ENCODE measurements at regions of chr16 and their contacts with region 1.

Region 1: DNA sequence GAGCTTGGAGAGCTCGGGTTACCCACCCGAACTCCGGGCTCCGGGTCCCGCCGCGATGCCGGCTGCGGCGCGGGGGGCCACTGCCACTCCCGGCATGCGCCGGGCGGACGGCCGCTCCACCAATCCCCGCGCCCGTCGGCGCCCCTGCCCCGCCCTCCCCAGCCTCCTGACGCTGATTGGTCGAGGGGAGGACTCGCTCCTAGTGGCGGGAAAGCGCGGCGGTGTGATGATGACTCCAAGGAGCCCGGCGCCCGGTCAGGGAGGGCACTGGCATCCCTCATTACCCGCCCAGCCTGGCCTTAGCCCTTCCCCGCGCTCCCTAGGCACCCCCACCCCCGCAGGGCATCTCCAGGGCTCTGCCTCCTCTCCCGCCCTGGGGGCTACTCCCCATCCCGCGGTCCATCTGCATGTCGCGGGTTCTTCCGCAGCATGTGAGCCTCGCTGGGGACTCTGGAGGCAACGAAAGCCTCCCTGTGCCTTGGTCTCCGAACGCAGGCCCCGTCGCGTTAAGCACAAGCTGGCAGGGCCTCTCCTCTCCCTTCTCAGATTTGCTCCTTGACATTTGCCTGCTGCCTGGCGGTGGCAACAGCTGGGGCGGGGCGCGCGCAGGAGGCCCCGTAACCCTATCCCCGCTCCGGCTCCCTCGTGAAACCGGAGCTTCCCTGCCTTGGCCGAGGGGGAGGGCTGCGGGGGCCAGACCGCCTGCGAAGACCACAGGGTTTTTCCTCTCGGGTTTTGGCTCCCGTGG is 1.7 kb downstream of the ATP2A1 start:
- DNase-seq: peak; percentile 85 to 87 (median 86)
- ATAC-seq: peak; percentile 97
- H3K4me3 ChIP-seq: peak overlapping the region; percentile 5 to 19
- H3K27ac ChIP-seq: peak overlapping the region in 1 of 4 donors; percentile 17
- H3K4me1 ChIP-seq: peaks cover 13% of the 10 kb centered on the region
- H3K27me3 ChIP-seq: no peaks in the 10 kb centered on the region
- CTCF ChIP-seq: peak in 5 of 7 experiments; percentile 14 to 49 (median 35)
- POLR2A ChIP-seq: no peak

Region 2: DNA sequence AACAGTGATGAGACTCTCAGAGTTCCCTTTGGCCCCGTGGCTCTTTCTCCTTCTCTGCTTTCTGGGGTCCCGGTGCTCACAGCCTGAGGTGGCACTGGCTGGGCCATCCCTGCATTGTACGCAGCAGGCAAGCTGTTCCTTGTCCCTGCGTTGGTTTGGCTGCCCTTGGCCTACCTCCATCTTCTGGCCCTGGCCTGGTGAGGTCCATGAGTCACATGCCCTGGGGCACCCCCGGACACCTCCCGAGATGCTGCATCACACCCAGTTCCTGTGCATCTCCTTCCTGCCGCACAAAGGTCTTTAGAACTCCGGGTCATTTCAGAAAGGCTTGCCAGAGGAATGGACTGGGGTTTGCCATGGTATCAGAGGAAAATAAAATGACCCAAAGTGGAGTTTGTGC is 292.6 kb before region 1 on chr16:
- intact Hi-C with region 1: no loop called
- DNase-seq: no peak
- ATAC-seq: no peak
- H3K4me3 ChIP-seq: no peak overlapping the region
- H3K27ac ChIP-seq: no peak overlapping the region
- H3K4me1 ChIP-seq: peaks cover 9% of the 10 kb centered on the region
- H3K27me3 ChIP-seq: no peaks in the 10 kb centered on the region
- CTCF ChIP-seq: no peak
- POLR2A ChIP-seq: no peak

Region 3: DNA sequence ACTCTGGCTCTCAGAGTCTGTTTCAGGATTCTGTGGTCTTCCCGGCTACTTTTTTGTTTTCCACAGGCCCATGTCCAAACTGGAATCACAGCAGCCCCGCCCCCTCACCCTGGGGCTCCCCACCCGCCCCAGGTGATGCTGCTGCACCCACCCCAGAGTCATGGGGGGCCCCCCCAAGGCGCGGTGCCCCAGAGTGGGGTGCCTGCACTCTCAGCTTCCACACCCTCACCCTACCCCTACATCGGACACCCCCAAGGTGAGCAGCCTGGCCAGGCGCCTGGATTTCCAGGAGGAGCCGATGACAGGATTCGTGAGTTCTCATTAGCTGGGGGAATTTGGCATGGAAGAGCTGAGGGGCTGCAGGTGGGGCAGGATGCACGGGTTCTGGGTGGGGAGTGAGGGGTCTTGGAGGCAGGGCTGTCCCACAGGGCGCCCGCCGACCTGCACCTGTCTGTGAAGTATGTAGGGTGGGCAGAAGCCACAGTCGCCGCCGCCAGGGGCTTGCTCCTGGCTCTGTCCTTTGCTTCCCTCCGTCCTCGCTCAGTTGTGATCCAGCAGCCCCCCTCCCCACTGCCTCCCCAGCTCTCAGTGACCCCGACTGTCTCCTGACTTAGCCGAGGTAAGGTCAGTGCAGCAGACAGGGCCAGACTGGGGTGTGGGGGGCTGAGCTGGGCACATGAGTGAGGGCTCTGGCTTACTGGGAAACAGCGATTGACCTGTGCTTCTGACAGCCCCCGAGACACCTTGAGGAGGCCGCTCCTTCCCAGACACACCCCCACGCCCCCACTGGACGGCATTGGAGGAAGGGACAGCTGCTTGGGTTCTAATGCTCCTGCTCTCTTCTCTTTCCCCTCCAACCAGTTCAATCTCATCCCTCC is 43.9 kb before region 1 on chr16:
- intact Hi-C with region 1: no loop called
- DNase-seq: no peak
- ATAC-seq: no peak
- H3K4me3 ChIP-seq: no peak overlapping the region
- H3K27ac ChIP-seq: no peak overlapping the region
- H3K4me1 ChIP-seq: no peaks in the 10 kb centered on the region
- H3K27me3 ChIP-seq: no peaks in the 10 kb centered on the region
- CTCF ChIP-seq: no peak
- POLR2A ChIP-seq: no peak

Region 4: DNA sequence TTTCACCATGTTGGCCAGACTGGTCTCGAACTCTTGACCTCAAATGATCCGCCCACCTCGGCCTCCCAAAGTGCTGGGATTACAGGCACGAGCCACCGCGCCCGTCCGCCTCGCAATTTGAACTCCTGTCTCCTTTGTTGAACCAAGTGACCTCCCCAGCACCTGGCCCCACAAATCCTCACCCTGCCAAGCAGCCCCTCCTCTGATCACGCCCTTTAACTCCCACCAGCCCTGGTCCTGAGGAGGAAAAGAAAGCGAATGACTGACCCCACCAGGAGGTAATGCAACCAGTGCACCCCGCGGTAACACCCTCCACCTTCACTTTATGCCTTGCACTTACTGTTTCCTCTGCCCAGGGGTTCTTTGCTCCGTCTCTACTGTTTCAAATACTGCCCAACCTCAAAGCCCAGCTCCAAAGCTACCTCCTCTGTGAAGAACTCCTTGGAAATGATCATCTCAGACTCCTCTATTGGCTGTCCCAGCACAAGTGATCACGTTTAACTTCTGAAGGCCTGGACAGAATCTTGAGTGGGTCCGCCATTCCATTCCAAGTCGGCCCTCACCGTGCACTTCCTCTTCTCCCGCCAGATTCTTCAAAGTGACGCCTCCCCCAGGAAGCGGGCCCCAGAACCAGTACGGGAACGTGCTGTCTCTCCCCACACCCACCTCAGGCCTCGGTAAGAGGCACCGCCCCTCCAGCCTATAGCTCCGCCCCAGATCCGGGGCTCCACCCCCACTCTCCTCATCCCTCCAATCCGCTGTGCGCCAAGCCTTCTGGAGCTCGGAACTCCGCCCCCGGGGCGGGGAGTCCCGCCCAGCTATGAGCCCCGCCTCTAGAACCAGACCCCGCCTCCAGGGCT is 56.1 kb after region 1 on chr16:
- intact Hi-C with region 1: loop called (anchors 10 kb)
- DNase-seq: peak; percentile 70 to 90 (median 82)
- ATAC-seq: peak; percentile 95
- H3K4me3 ChIP-seq: no peak overlapping the region
- H3K27ac ChIP-seq: no peak overlapping the region
- H3K4me1 ChIP-seq: peaks cover 12% of the 10 kb centered on the region
- H3K27me3 ChIP-seq: no peaks in the 10 kb centered on the region
- CTCF ChIP-seq: no peak
- POLR2A ChIP-seq: no peak

Region 5: GRCh38 chr16:29315615-29316517 is 435.9 kb after region 1 on chr16:
- intact Hi-C with region 1: no loop called
- DNase-seq: no peak
- ATAC-seq: no peak
- H3K4me3 ChIP-seq: no peak overlapping the region
- H3K27ac ChIP-seq: peak overlapping the region in 1 of 4 donors; percentile 39
- H3K4me1 ChIP-seq: peaks cover 20% of the 10 kb centered on the region
- H3K27me3 ChIP-seq: no peaks in the 10 kb centered on the region
- CTCF ChIP-seq: peak in 4 of 7 experiments; percentile 25 to 40 (median 27)
- POLR2A ChIP-seq: no peak